ENCODE measurements at regions of chr7 and their contacts with region 1.

Region 1: DNA sequence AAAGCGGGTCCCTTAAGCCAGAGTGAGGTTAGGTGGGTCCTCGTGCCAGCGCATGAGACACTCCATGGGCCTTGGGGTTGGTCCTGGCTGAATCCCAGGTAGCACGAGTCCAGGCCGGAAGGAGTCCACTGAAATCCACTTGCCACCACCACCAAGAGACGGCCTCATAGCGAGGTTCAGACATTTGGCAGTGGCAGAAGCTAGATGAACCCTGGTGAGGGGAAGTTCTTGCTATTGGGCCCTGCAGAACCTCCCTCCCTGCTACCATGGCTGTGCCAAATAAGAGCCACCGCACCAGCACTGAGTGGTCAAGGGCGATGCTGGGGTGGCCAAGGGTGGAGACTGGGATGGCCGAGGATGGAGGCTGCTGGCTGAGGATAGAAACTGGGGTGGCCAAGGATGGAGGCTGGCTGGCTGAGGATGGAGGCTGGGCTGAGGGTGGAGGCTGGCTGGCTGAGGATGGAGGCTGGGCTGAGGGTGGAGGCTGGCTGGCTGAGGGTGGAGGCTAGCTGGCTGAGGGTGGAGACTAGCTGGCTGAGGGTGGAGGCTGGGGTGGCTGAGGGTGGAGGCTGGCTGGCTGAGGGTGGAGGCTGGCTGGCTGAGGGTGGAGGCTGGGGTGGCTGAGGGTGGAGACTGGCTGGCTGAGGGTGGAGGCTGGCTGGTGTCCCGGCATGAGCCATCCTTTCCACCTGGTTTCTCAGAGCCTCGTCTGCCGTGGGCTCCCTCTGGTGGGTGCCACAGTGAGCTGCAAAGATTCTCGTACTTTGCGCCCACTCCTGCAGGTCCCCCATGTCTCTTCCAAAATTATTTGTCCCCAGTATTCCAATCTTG is 88.2 kb downstream of the ELFN1 start:
- DNase-seq: peak; percentile 68
- ATAC-seq: peak; percentile 84
- H3K4me3 ChIP-seq: no peak overlapping the region
- H3K27ac ChIP-seq: no peak overlapping the region
- H3K4me1 ChIP-seq: no peaks in the 10 kb centered on the region
- H3K27me3 ChIP-seq: peaks cover 23% of the 10 kb centered on the region
- CTCF ChIP-seq: peak; percentile 59

Region 2: GRCh38 chr7:1432411-1433082 is 325.7 kb before region 1 on chr7:
- CTCF ChIA-PET with region 1: no interaction called
- POLR2A ChIA-PET with region 1: no interaction called
- intact Hi-C with region 1: no loop called
- DNase-seq: peak; percentile 79
- ATAC-seq: peak; percentile 73
- H3K4me3 ChIP-seq: no peak overlapping the region
- H3K27ac ChIP-seq: no peak overlapping the region
- H3K4me1 ChIP-seq: no peaks in the 10 kb centered on the region
- H3K27me3 ChIP-seq: no peaks in the 10 kb centered on the region
- CTCF ChIP-seq: peak; percentile 88

Region 3: DNA sequence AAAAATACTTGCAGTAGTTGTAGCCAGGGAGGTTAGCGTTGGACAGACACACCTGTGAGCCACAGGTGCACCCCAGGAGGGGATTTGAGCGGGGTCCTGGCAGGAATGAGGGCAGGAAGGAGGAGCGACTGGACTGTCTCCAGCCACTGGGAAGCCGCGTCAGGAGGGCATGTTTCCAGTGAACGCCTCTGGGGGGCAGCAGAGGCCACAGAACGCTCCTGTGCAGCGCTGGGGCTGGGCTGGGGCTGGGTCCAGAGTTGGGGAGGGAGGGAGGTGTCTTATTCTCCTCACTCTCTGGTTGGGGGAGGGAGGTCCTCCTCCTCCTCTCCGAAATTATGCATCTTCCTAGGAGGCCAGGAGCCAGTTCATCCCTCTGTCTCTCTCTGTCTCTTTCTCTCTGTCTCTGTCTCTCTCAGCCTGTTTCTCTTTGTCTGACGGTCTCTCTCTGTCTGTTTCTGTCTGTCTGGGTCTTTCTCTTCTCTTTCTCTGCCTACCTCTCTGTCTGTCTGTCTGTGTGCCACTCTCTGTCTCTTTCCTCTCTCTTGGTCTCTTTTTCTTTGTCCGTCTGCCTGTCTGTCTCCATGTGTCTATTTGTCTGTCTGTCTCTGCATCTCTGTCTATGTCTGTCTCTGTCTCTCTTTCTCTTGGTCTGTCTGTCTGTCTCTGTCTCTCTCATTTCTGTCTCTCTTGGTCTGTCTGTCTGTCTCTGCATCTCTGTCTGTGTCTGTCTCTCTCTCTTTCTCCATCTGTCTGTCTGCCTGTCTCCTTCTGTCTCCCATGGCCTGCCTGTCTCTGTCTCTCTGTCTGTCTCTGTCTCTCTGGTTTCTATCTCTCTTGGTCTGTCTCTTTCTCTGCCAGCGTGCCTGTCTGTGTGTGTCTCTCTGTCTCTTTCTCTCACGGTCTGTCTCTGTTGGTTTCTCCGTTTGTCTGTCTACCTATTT is 178.5 kb before region 1 on chr7:
- CTCF ChIA-PET with region 1: no interaction called
- POLR2A ChIA-PET with region 1: no interaction called
- intact Hi-C with region 1: loop called (anchors 2 kb)
- DNase-seq: peak; percentile 75
- ATAC-seq: peak; percentile 99
- H3K4me3 ChIP-seq: no peak overlapping the region
- H3K27ac ChIP-seq: no peak overlapping the region
- H3K4me1 ChIP-seq: no peaks in the 10 kb centered on the region
- H3K27me3 ChIP-seq: no peaks in the 10 kb centered on the region
- CTCF ChIP-seq: peak; percentile 83

Measured in PC-3 (cell line).